ENCODE measurements at regions of chr10 and their contacts with region 1.

Region 1: DNA sequence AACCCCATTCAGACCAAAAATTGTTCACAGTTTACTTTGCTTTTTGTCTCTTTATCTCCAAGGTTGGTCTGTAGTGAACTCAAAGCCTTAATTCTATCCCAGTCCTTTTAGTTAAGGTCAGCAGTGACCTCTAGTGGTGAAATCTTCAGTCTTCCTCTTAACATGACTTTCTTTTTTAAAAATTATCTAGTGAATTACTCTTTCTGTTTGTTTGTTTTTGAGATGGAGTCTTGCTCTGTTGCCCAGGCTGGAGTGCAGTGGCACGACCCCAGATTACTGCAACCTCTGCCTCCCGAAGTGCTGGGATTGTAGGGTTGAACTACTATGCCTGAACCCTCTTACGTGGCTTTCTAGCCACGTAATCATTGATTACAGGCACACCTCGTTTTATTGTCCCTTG is 25.0 kb downstream of the ZNF487 start:
- DNase-seq: no peak
- H3K4me3 Mint-ChIP-seq: no peak overlapping the region
- H3K27ac Mint-ChIP-seq: peak overlapping the region; percentile 54
- H3K4me1 Mint-ChIP-seq: peaks cover 18% of the 10 kb centered on the region
- H3K27me3 Mint-ChIP-seq: no peaks in the 10 kb centered on the region

Region 2: DNA sequence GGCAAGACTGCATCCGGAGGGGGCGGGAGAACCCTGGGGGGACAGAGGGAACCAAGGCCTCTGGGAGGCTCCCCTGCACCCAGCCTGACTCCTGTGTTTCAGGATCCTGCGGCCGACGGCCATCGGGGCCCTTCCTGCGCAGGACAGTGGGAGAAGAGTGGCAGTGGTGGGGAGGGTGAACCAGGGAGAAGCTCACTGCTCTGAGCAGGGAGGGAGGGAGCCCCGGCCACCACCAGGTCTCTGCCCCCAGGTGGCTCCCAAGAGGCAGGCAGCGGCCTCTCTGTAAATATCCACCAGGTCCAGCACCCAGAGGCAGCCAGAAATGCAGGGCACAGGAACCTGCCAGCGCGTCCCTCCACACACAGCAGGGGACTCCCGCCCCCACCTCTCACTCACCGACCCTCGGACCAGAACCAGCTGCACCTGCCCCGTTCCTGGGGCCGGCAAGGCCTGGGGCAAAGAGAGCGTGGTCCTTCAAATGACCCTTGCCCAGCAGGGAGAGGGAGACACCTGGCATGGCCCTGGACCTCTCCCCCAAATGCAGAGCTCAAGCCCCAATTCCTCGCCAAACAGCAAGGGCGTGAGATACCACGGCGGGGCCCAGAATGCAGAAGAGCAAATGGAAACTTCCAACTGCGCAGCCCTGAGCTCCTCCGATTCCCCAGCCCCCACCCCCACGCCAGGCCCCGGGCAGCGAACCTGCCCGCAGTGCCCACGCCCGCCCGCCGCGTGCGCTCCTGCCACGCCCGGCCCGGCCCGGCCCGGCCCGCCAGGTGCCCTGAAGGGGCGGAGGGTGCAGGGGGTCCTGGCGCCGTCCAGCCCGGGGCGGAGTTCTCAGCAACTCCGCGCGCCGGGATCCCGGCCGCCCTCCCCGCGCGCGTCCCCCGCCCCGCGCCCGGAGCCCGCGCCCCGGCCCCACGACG is 195.9 kb before region 1 on chr10:
- CTCF ChIA-PET with region 1: interaction called, 3 read pairs
- POLR2A ChIA-PET with region 1: no interaction called
- intact Hi-C with region 1: loop called (anchors 5 kb)
- DNase-seq: peak; percentile 62
- H3K4me3 Mint-ChIP-seq: peak overlapping the region; percentile 67
- H3K27ac Mint-ChIP-seq: no peak overlapping the region
- H3K4me1 Mint-ChIP-seq: peaks cover 4% of the 10 kb centered on the region
- H3K27me3 Mint-ChIP-seq: peaks cover 25% of the 10 kb centered on the region

Region 3: GRCh38 chr10:44316187-44316921 is 854.4 kb after region 1 on chr10:
- CTCF ChIA-PET with region 1: no interaction called
- POLR2A ChIA-PET with region 1: no interaction called
- intact Hi-C with region 1: no loop called
- DNase-seq: peak; percentile 43
- H3K4me3 Mint-ChIP-seq: no peak overlapping the region
- H3K27ac Mint-ChIP-seq: no peak overlapping the region
- H3K4me1 Mint-ChIP-seq: peaks cover 2% of the 10 kb centered on the region
- H3K27me3 Mint-ChIP-seq: peaks cover 9% of the 10 kb centered on the region